ENCODE measurements at regions of chr2 and their contacts with region 1.

Region 1: GRCh38 chr2:7037340-7038333 is 120.4 kb downstream of the RNF144A start:
- DNase-seq: peak; percentile 88 to 92
- ATAC-seq: peak; percentile 91
- H3K4me3 ChIP-seq: no peak overlapping the region
- H3K27ac ChIP-seq: no peak overlapping the region
- H3K4me1 ChIP-seq: no peaks in the 10 kb centered on the region
- H3K27me3 ChIP-seq: no peaks in the 10 kb centered on the region

Region 2: GRCh38 chr2:6896930-6897759 is 140.5 kb before region 1 on chr2:
- intact Hi-C with region 1: loop called in 1 of 2 experiments (anchors 5 kb)
- DNase-seq: no peak
- ATAC-seq: peak; percentile 74
- H3K4me3 ChIP-seq: no peak overlapping the region
- H3K27ac ChIP-seq: no peak overlapping the region
- H3K4me1 ChIP-seq: no peaks in the 10 kb centered on the region
- H3K27me3 ChIP-seq: no peaks in the 10 kb centered on the region

Region 3: GRCh38 chr2:7097348-7097895 is 59.8 kb after region 1 on chr2:
- intact Hi-C with region 1: loop called in 1 of 2 experiments (anchors 5 kb)
- DNase-seq: peak; percentile 80 to 93
- ATAC-seq: peak; percentile 91
- H3K4me3 ChIP-seq: no peak overlapping the region
- H3K27ac ChIP-seq: no peak overlapping the region
- H3K4me1 ChIP-seq: no peaks in the 10 kb centered on the region
- H3K27me3 ChIP-seq: no peaks in the 10 kb centered on the region

Region 4: DNA sequence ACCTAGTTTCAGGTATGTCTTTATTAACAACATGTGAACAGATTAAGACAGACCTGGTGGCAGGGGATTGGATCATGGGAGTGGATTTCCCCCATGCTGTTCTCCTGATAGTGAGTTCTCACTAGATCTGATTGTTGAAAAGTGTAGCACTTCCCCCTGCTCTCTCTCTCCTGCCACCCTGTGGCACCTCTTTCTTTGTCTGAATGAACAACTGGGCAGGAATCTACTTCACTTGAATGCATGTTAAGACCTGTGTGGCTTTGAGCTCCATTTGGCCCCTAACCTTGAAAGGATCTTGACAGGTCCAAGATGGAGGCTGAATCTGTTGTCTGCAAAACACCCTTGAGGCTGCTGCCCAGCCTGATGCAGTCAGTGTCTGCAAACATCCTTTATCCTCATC is 74.0 kb after region 1 on chr2:
- intact Hi-C with region 1: loop called in 1 of 2 experiments (anchors 5 kb)
- DNase-seq: no peak
- ATAC-seq: no peak
- H3K4me3 ChIP-seq: no peak overlapping the region
- H3K27ac ChIP-seq: no peak overlapping the region
- H3K4me1 ChIP-seq: no peaks in the 10 kb centered on the region
- H3K27me3 ChIP-seq: no peaks in the 10 kb centered on the region

Region 5: DNA sequence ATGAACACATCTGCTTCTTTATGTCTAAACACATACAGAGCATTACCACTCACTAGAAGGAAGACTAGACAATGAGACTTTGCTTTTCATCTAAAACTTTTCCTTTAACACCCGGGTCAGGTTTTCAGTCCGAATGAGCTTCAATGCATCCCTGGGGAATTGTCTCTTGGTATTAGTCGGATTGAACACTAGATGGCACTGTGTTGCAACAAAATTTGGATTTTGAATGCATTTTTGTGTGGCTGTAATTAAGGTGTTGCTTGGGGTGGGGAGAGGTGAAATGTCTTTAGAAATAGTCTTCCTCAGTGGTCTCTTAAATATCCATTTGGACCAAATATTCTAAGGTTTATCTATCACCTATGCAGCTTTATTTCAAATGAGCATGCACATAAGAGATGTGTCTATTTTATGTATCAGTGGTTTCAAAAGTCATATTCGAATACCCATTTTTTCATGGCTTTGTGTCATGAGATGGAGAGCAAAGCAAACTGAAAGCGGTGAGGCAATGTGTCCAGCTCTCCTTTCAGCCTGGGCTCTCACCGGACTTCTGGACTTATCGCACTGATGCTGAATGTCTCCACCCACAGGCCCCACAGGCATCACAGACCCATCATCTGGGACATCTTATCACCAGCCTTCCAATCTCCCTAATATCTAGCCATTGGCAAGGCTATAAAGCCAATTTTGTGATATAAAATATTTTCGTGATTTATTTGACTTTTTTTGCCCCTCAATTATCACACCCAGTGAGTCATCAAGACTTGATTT is 389.8 kb after region 1 on chr2:
- intact Hi-C with region 1: loop called in 1 of 2 experiments (anchors 10 kb)
- DNase-seq: no peak
- ATAC-seq: peak; percentile 66
- H3K4me3 ChIP-seq: no peak overlapping the region
- H3K27ac ChIP-seq: no peak overlapping the region
- H3K4me1 ChIP-seq: no peaks in the 10 kb centered on the region
- H3K27me3 ChIP-seq: no peaks in the 10 kb centered on the region